ENCODE measurements at regions of chr5 and their contacts with region 1.

Region 1: GRCh38 chr5:147788023-147788422 is 5.5 kb upstream of the JAKMIP2 start:
- DNase-seq: no peak
- H3K4me3 ChIP-seq: no peak overlapping the region
- H3K27ac ChIP-seq: peak overlapping the region in 1 of 59 donors; percentile 21
- H3K27me3 ChIP-seq: no peaks in the 10 kb centered on the region
- CTCF ChIP-seq: no peak

Region 2: GRCh38 chr5:146744068-146744745 is 1043.8 kb before region 1 on chr5:
- intact Hi-C with region 1: no loop called
- DNase-seq: peak in 5 of 10 donors; percentile 31 to 59 (median 40)
- H3K4me3 ChIP-seq: peak overlapping the region in 2 of 59 donors; percentile 6 to 17
- H3K27ac ChIP-seq: peak overlapping the region in 58 of 59 donors; percentile 7 to 88 (median 70)
- H3K27me3 ChIP-seq: no peaks in the 10 kb centered on the region
- CTCF ChIP-seq: peak in 2 of 56 donors; percentile 9 to 25

Region 3: GRCh38 chr5:147704544-147704943 is 83.5 kb before region 1 on chr5:
- intact Hi-C with region 1: no loop called
- DNase-seq: no peak
- H3K4me3 ChIP-seq: no peak overlapping the region
- H3K27ac ChIP-seq: peak overlapping the region in 11 of 59 donors; percentile 11 to 48 (median 27)
- H3K27me3 ChIP-seq: no peaks in the 10 kb centered on the region
- CTCF ChIP-seq: no peak

Region 4: DNA sequence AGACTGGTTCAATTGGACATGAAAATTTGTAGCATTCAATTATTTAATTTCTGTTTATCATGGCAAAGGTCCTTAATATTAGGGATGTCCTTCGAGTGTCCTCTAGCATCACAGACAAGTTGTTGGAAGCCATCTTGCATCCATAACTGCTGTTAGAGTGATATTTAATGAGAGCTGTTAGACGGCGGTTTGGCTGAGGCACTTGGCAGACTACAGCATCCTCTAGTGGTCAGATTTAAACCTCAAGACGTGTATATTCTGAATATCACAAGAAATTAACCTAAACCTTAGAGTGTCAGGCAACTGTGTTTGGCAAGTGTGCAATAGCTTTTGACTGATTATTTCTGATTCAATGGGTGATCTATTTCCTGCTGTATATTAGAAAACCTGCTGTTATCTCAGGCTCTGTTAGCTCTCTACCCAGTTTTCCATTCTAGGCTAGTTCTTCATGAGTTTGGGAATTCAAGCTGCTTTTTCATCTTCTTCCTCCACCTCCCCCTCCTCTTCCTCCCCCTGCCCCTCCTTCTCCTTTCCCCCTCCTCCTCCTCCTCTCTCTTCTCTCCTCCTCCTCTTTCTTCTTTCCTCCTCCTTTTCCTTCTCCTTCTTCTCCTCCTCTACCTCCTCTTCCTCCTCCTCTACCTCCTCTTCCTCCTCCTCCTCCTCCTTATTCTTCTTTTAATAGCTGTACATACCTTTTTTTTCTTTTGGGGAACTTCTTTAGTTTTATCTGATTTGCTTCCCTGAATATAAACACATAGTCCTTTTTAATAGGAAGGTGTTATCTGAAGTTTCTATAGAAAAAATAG is 34.9 kb after region 1 on chr5:
- intact Hi-C with region 1: loop called in 1 of 2 experiments (anchors 5 kb)
- DNase-seq: peak in 8 of 10 donors; percentile 34 to 77 (median 57)
- H3K4me3 ChIP-seq: no peak overlapping the region
- H3K27ac ChIP-seq: no peak overlapping the region
- H3K27me3 ChIP-seq: no peaks in the 10 kb centered on the region
- CTCF ChIP-seq: peak; percentile 84 to 99 (median 94)